CD8-positive, alpha-beta memory T cell (primary cell): ENCODE measurements at regions of chr4 and their contacts with region 1.

Region 1: DNA sequence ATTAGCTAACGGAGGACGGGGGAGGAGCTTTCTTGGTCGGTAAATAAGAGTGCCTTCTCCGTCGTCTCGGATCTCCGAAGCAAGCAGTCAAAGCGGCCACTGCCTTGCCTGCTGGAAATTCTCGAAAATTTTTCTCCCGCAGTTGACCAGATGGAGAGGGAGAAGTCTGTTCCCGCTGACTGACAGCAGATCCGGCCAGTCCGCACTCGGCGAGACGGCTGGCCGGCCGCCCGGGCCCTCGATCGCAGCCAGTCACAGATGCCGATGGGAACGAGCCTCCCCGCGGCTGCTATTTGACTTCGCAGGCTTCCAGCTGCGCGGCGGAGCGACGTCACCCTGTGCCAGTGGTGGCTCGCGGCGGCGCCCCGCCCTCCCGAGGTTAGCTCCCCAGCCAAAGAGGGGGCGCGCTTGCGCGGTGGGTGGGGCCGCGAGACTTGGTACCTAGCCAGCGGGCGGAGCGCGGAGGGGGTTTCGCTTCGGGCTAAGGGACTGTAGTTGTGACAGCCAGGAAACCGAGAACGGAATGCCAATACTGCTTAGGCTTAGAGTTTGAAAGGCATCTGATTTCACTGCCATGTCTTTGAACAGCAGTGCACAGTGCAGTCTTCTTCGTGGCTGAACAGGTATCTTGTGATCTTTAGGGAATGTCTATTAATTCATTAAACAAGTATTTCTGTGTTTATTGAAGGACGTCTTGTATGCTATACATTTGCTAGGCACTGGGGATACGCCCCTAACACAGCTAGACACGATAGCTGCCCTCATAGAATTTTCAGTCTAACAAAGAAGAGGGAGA is at the start of gene PPM1K:
- DNase-seq: peak; percentile 99 to 100 (median 99)
- H3K4me3 ChIP-seq: peak within 1 kb of the TSS; percentile 91
- H3K4me3 Mint-ChIP-seq: peak within 1 kb of the TSS; percentile 90 to 98 (median 94)
- H3K27ac ChIP-seq: peak within 1 kb of the TSS; percentile 99
- H3K27ac Mint-ChIP-seq: peak within 1 kb of the TSS; percentile 97 to 100 (median 99)
- H3K4me1 ChIP-seq: peaks cover 40% of the 10 kb centered on the region
- H3K4me1 Mint-ChIP-seq: peaks cover 43 to 49% (median 48%) of the 10 kb centered on the region in 3 donors
- H3K27me3 ChIP-seq: no peaks in the 10 kb centered on the region
- H3K27me3 Mint-ChIP-seq: peaks cover 0 to 1% of the 10 kb centered on the region in 2 donors
- total RNA-seq, gene PPM1K: 38.2 to 44.3 TPM

Region 2: GRCh38 chr4:87006676-87007527 is 1277.7 kb before region 1 on chr4:
- CTCF ChIA-PET with region 1: no interaction called
- POLR2A ChIA-PET with region 1: interaction called, 11 read pairs
- DNase-seq: peak; percentile 81 to 92 (median 89)
- H3K4me3 ChIP-seq: peak overlapping the region; percentile 94
- H3K4me3 Mint-ChIP-seq: peak overlapping the region; percentile 92 to 95 (median 93)
- H3K27ac ChIP-seq: peak overlapping the region; percentile 85
- H3K27ac Mint-ChIP-seq: peak overlapping the region; percentile 94 to 100 (median 98)
- H3K4me1 ChIP-seq: peaks cover 53% of the 10 kb centered on the region
- H3K4me1 Mint-ChIP-seq: peaks cover 52 to 65% (median 63%) of the 10 kb centered on the region in 3 donors
- H3K27me3 ChIP-seq: no peaks in the 10 kb centered on the region
- H3K27me3 Mint-ChIP-seq: no peaks in the 10 kb centered on the region

Region 3: DNA sequence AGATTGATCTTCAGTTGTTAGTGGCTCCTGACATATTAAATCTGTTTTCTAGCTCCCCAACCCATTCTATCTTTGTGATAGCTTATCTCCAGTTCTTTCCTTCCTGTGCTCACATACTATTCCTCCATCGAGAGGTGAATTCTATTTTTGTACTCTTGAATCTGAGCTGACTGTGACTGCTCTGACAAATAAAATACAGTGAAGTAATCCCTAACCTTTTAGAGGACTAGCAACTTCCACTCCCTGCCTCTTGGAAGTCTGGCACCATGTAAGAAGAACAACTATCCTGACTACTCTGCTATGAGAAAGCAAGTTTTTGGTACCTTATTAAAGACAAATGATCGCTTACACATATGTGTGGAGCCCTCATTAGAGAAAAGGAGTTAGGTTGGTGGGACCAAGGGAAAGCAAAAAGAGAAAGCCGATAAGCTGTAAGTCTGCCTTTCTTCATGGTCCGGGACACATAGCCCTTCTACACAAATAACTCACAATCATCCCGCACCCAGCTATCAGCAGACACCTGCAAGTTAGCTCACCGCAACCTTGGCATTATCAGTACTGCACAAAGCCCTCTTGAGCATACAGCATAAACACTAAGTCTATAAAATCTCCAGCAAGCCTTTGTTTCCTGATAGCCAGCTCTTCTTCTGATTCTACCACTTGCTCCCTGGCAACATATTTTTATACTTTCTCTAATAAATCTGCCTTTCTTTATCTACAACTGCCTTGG is 13.3 kb after region 1 on chr4:
- CTCF ChIA-PET with region 1: interaction called, 8 read pairs
- POLR2A ChIA-PET with region 1: interaction called, 19 read pairs
- DNase-seq: no peak
- H3K4me3 ChIP-seq: no peak overlapping the region
- H3K4me3 Mint-ChIP-seq: no peak overlapping the region
- H3K27ac ChIP-seq: no peak overlapping the region
- H3K27ac Mint-ChIP-seq: no peak overlapping the region
- H3K4me1 ChIP-seq: no peaks in the 10 kb centered on the region
- H3K4me1 Mint-ChIP-seq: no peaks in the 10 kb centered on the region
- H3K27me3 ChIP-seq: no peaks in the 10 kb centered on the region
- H3K27me3 Mint-ChIP-seq: peaks cover 4% of the 10 kb centered on the region in 2 donors

Region 4: GRCh38 chr4:88378691-88379559 is 94.3 kb after region 1 on chr4 and contains the start of gene HERC6:
- CTCF ChIA-PET with region 1: interaction called, 11 read pairs
- POLR2A ChIA-PET with region 1: interaction called, 27 read pairs
- DNase-seq: peak; percentile 55 to 84 (median 78)
- H3K4me3 ChIP-seq: peak within 1 kb of the TSS; percentile 94
- H3K4me3 Mint-ChIP-seq: peak within 1 kb of the TSS; percentile 93 to 97 (median 96)
- H3K27ac ChIP-seq: peak within 1 kb of the TSS; percentile 91
- H3K27ac Mint-ChIP-seq: peak within 1 kb of the TSS; percentile 86 to 99 (median 97)
- H3K4me1 ChIP-seq: peaks cover 33% of the 10 kb centered on the region
- H3K4me1 Mint-ChIP-seq: peaks cover 37 to 59% (median 48%) of the 10 kb centered on the region in 3 donors
- H3K27me3 ChIP-seq: no peaks in the 10 kb centered on the region
- H3K27me3 Mint-ChIP-seq: no peaks in the 10 kb centered on the region
- total RNA-seq, gene HERC6: 3.7 to 5.4 TPM

Region 5: GRCh38 chr4:88398381-88398780 is 113.7 kb after region 1 on chr4:
- CTCF ChIA-PET with region 1: no interaction called
- POLR2A ChIA-PET with region 1: no interaction called
- DNase-seq: no peak
- H3K4me3 ChIP-seq: no peak overlapping the region
- H3K4me3 Mint-ChIP-seq: no peak overlapping the region
- H3K27ac ChIP-seq: no peak overlapping the region
- H3K27ac Mint-ChIP-seq: no peak overlapping the region
- H3K4me1 ChIP-seq: no peaks in the 10 kb centered on the region
- H3K4me1 Mint-ChIP-seq: no peaks in the 10 kb centered on the region
- H3K27me3 ChIP-seq: no peaks in the 10 kb centered on the region
- H3K27me3 Mint-ChIP-seq: no peaks in the 10 kb centered on the region

Region 6: GRCh38 chr4:88514557-88515511 is 230.2 kb after region 1 on chr4:
- CTCF ChIA-PET with region 1: interaction called, 12 read pairs
- POLR2A ChIA-PET with region 1: no interaction called
- DNase-seq: no peak
- H3K4me3 ChIP-seq: no peak overlapping the region
- H3K4me3 Mint-ChIP-seq: no peak overlapping the region
- H3K27ac ChIP-seq: no peak overlapping the region
- H3K27ac Mint-ChIP-seq: peak overlapping the region in 1 of 8 donors; percentile 12
- H3K4me1 ChIP-seq: no peaks in the 10 kb centered on the region
- H3K4me1 Mint-ChIP-seq: no peaks in the 10 kb centered on the region
- H3K27me3 ChIP-seq: no peaks in the 10 kb centered on the region
- H3K27me3 Mint-ChIP-seq: peaks cover 3 to 4% of the 10 kb centered on the region in 2 donors